ENCODE measurements at regions of chr2 and their contacts with region 1.

Region 1: DNA sequence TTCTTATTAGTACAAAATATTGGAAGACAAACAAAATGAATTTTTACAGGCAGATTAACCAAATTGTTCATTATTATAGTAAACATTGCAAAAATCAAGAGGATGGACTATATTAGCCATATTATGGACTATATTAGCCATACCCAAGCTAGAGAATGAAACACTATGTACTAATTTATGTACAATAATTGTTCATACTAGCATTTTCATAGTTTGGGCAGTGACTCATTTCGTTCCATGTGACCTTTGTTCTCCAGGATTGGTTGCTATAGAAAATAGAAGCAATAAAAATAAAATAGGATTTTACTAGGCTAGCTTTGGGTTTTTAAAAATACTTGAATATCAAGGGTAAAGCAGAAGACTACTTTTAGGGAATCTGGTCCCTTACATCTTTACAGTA is 176.8 kb downstream of the ZEB2 start:
- DNase-seq: no peak
- ATAC-seq: no peak
- H3K4me3 Mint-ChIP-seq: no peak overlapping the region
- H3K27ac Mint-ChIP-seq: no peak overlapping the region
- H3K4me1 Mint-ChIP-seq: peaks cover 13% of the 10 kb centered on the region
- H3K27me3 Mint-ChIP-seq: no peaks in the 10 kb centered on the region
- CTCF ChIP-seq: no peak

Region 2: GRCh38 chr2:144320491-144320890 is 22.7 kb before region 1 on chr2:
- CTCF ChIA-PET with region 1: no interaction called
- POLR2A ChIA-PET with region 1: no interaction called
- intact Hi-C with region 1: loop called (anchors 1 kb)
- DNase-seq: no peak
- ATAC-seq: peak; percentile 56
- H3K4me3 Mint-ChIP-seq: no peak overlapping the region
- H3K27ac Mint-ChIP-seq: no peak overlapping the region
- H3K4me1 Mint-ChIP-seq: peaks cover 44% of the 10 kb centered on the region
- H3K27me3 Mint-ChIP-seq: no peaks in the 10 kb centered on the region
- CTCF ChIP-seq: no peak

Measured in activated B cell treated with CpG ODN at 0.5 μM for 24 hours (primary cell).